Activated CD4-positive, alpha-beta T cell treated with anti-CD3 and anti-CD28 coated beads, Interleukin-2, amount 10 ng/mL, durations not matched to agents 24 days and 14 days (primary cell): ENCODE measurements at regions of chr5 and their contacts with region 1.

Region 1: DNA sequence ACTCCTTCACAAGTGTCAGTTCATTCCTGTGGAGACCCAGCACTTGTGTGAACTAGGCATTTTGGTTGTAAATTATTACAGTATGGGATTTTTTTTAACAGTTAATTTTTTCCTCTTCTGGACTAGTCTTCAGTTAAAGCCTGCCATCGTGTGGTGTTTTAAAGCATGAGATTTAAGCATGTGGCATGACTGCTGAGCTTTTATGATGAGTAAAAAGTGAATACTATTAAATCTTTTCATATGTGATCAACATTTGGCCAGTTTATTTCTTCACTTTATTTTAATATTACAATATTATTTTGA is 25.0 kb downstream of the LMNB1 start:
- DNase-seq: peak; percentile 72
- H3K4me3 Mint-ChIP-seq: no peak overlapping the region
- H3K27ac Mint-ChIP-seq: peak overlapping the region; percentile 6
- H3K4me1 Mint-ChIP-seq: peaks cover 45% of the 10 kb centered on the region
- H3K27me3 Mint-ChIP-seq: no peaks in the 10 kb centered on the region

Region 2: GRCh38 chr5:126676195-126676624 is 125.7 kb before region 1 on chr5:
- intact Hi-C with region 1: loop called (anchors 1 kb)
- DNase-seq: peak; percentile 91
- H3K4me3 Mint-ChIP-seq: no peak overlapping the region
- H3K27ac Mint-ChIP-seq: no peak overlapping the region
- H3K4me1 Mint-ChIP-seq: peaks cover 22% of the 10 kb centered on the region
- H3K27me3 Mint-ChIP-seq: no peaks in the 10 kb centered on the region

Region 3: GRCh38 chr5:126776497-126777256 is 25.3 kb before region 1 on chr5 and contains the start of gene LMNB1:
- intact Hi-C with region 1: no loop called
- DNase-seq: peak; percentile 99
- H3K4me3 Mint-ChIP-seq: peak within 1 kb of the TSS; percentile 97
- H3K27ac Mint-ChIP-seq: peak within 1 kb of the TSS; percentile 98
- H3K4me1 Mint-ChIP-seq: peaks cover 30% of the 10 kb centered on the region
- H3K27me3 Mint-ChIP-seq: no peaks in the 10 kb centered on the region
- total RNA-seq, gene LMNB1: 223 and 225 TPM in 2 replicates